ENCODE measurements at regions of chr17 and their contacts with region 1.

Region 1: GRCh38 chr17:42112552-42113176 is at the start of gene DHX58:
- DNase-seq: peak; percentile 55
- ATAC-seq: peak; percentile 76
- H3K4me3 Mint-ChIP-seq: peak within 1 kb of the TSS; percentile 80
- H3K27ac Mint-ChIP-seq: peak within 1 kb of the TSS; percentile 91
- H3K4me1 Mint-ChIP-seq: peaks cover 57% of the 10 kb centered on the region
- H3K27me3 Mint-ChIP-seq: no peaks in the 10 kb centered on the region
- CTCF ChIP-seq: no peak
- total RNA-seq, gene DHX58: 21.9 and 22.4 TPM in 2 replicates

Region 2: DNA sequence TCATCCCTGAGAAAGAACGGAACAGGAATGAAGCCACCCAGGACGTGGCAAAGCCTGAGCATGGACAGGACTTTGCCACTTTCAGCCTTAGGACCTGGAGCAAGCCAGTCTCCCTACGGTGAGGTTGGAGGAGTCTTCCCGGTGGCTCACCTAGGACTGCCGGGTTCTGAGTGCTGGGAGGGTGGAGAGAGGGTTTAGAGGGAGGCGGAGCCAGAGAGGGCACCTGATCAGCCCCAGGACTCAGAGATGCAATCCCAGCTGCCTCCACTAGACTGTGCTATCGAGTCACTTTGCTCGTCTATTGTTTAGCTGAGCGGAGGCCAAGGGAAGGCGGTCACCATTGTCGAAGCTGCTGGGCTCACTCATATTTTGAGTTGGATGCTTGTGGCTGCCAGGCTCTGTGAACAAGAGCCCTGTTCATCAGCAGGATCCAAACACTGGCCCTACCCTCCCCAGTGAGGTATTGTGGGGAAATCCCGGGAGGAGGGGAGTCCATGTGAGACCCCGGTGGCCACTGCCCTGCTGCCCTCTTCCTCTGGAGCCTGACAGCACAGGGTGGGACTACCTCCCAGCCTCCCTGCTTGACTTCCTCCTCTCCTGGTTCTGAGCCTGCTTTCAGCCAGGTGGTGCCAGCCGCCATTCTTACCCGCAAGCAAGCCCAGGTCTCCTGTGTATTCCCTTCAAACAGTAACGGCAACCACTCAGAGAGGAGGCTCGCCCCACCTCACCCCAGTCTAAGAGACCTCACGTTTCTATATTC is 533.0 kb before region 1 on chr17:
- CTCF ChIA-PET with region 1: no interaction called
- POLR2A ChIA-PET with region 1: no interaction called
- intact Hi-C with region 1: no loop called
- DNase-seq: no peak
- ATAC-seq: peak; percentile 66
- H3K4me3 Mint-ChIP-seq: no peak overlapping the region
- H3K27ac Mint-ChIP-seq: no peak overlapping the region
- H3K4me1 Mint-ChIP-seq: no peaks in the 10 kb centered on the region
- H3K27me3 Mint-ChIP-seq: peaks cover 44% of the 10 kb centered on the region
- CTCF ChIP-seq: no peak

Region 3: DNA sequence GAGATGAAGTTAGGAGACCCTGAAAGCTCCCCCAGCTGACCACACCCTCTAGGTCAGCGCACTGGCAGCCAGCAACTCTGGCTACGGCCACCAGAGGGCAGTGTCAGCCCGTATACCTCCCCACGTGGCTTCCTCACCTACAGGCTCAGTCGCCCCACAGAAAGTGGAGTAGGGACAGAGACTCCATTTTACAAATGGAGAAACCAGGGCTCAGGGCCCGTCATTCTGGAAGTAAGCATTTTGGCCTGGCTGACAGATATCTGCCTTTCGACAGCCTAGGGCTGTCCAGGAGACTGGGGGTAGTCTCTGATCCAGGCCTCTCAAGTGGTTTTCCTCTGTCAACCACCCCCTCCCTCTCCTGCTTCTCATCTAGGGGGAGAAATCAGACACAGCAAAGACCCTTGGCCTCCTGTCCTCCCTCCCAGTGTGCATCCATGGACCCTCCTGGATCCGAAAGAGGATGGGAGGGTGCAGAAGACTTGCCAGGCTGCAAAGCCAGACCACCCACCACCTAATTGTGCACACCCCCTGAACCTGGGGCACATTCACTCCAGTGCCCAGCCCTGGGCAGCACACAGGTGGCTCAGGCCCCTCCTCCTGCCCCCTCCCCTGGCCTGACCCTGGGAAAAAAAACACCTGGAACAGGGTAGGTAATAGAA is 374.5 kb before region 1 on chr17:
- CTCF ChIA-PET with region 1: no interaction called
- POLR2A ChIA-PET with region 1: no interaction called
- intact Hi-C with region 1: loop called (anchors 1 kb)
- DNase-seq: peak; percentile 77
- ATAC-seq: peak; percentile 96
- H3K4me3 Mint-ChIP-seq: no peak overlapping the region
- H3K27ac Mint-ChIP-seq: no peak overlapping the region
- H3K4me1 Mint-ChIP-seq: peaks cover 11% of the 10 kb centered on the region
- H3K27me3 Mint-ChIP-seq: peaks cover 22% of the 10 kb centered on the region
- CTCF ChIP-seq: peak; percentile 94

Region 4: GRCh38 chr17:41918314-41919164 is 194.1 kb before region 1 on chr17 and contains the start of gene ACLY:
- CTCF ChIA-PET with region 1: no interaction called
- POLR2A ChIA-PET with region 1: interaction called, 3 read pairs
- intact Hi-C with region 1: loop called (anchors 1 kb)
- DNase-seq: peak; percentile 96
- ATAC-seq: peak; percentile 99
- H3K4me3 Mint-ChIP-seq: peak within 1 kb of the TSS; percentile 92
- H3K27ac Mint-ChIP-seq: peak within 1 kb of the TSS; percentile 84
- H3K4me1 Mint-ChIP-seq: peaks cover 31% of the 10 kb centered on the region
- H3K27me3 Mint-ChIP-seq: no peaks in the 10 kb centered on the region
- CTCF ChIP-seq: no peak
- total RNA-seq, gene ACLY: 133 and 143 TPM in 2 replicates

Region 5: DNA sequence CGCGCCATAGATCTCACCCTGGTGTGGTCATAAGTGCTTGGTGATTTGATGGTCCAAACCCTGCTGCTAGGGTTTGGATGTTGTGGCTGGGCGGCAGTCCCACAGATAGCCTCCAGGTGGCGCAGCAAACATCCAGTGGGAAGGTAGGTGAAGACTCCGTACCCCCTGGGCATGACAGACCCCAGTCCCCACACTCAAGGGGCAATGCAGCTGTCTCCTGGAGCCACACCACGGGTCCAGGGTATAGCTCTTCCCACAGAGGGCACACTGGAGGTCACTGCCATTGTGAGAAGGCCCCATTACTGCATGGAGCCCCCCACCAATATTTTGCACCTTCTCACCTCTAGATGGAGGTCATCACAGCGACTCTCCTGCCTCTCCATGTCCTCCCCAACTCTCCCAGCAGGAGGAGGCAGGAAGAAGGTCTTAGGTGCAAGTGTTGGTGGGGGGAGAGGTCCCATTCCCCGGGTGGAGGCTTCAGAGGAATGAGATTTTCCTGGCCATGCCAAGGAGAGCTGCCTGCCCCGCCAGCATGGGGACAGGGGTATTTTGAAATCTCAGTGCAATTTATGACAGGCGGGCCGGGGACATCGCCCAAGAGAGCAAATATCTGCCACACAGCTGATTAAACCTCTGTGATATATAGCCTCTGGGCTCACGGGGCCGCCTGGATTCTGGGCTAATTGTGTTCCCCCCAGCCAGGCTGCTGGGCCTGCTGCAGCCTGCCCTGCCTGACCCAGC is 45.1 kb before region 1 on chr17:
- CTCF ChIA-PET with region 1: interaction called, 72 read pairs
- POLR2A ChIA-PET with region 1: interaction called, 7 read pairs
- intact Hi-C with region 1: loop called (anchors 1 kb)
- DNase-seq: peak; percentile 66
- ATAC-seq: peak; percentile 70
- H3K4me3 Mint-ChIP-seq: no peak overlapping the region
- H3K27ac Mint-ChIP-seq: no peak overlapping the region
- H3K4me1 Mint-ChIP-seq: peaks cover 28% of the 10 kb centered on the region
- H3K27me3 Mint-ChIP-seq: peaks cover 8% of the 10 kb centered on the region
- CTCF ChIP-seq: no peak

Region 6: DNA sequence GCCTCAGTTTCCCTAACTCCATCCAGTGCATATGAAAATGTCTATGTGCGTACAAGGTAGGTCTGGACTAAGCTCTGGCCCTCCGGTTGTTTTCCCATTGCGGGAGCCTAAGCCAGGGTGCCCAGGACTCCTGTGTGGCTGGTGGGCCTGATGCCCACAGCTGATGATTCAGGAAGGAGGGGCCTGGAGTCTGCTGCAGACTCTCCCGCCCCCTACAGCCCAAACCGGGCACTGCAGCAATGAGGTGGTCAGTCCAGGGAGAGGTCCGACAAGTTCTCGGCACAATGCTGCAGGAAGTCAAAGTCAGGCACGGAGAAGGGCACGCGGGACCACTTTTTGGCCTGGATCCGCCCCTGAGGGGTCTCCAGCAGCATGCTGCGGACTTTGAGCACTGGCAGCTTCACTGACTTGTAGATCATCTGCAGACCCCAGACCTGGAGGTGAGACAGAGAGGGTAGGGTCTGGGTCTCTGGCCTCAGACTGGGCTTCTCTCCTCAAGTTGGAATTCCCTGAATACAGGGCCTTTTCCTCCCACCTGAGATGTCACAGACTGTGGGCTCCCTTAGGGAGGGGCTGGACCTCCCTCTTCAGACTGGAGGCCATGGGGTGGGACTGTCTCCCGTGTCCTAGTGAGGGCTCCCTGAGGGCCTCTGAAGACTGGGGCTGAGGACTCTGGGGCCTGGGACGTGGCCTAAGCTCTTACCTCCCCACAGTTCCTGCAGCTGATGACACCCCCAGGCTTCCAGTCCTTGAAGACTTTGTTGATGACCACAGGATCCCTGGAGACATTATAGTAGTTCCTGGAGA is 10.9 kb before region 1 on chr17:
- CTCF ChIA-PET with region 1: interaction called, 8 read pairs
- POLR2A ChIA-PET with region 1: interaction called, 33 read pairs
- intact Hi-C with region 1: loop called (anchors 1 kb)
- DNase-seq: peak; percentile 67
- ATAC-seq: peak; percentile 60
- H3K4me3 Mint-ChIP-seq: no peak overlapping the region
- H3K27ac Mint-ChIP-seq: no peak overlapping the region
- H3K4me1 Mint-ChIP-seq: peaks cover 14% of the 10 kb centered on the region
- H3K27me3 Mint-ChIP-seq: no peaks in the 10 kb centered on the region
- CTCF ChIP-seq: no peak

Region 7: DNA sequence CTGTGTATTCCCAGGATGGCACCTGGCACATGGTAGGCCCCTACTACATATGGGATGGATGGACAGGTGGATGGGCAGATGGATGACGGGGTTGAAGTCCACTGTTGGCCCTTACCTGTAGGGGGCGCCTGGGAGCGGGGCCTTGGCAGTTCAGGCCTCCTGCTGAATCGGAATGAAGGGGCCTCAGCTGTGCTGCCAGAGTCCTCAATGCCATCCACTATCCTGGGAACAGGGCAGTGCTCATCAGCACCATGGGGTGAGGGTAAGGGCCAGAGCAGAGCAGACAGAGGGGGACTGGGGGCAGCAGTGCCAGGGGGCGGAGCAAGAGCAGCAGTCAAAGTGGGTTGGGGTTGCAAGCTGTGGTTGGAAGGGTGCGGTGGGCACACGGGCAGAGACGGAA is 50.4 kb after region 1 on chr17:
- CTCF ChIA-PET with region 1: no interaction called
- POLR2A ChIA-PET with region 1: no interaction called
- intact Hi-C with region 1: no loop called
- DNase-seq: no peak
- ATAC-seq: no peak
- H3K4me3 Mint-ChIP-seq: no peak overlapping the region
- H3K27ac Mint-ChIP-seq: no peak overlapping the region
- H3K4me1 Mint-ChIP-seq: peaks cover 8% of the 10 kb centered on the region
- H3K27me3 Mint-ChIP-seq: no peaks in the 10 kb centered on the region
- CTCF ChIP-seq: no peak

Region 8: GRCh38 chr17:42200702-42201101 is 88.0 kb after region 1 on chr17:
- CTCF ChIA-PET with region 1: no interaction called
- POLR2A ChIA-PET with region 1: no interaction called
- intact Hi-C with region 1: no loop called
- DNase-seq: no peak
- ATAC-seq: no peak
- H3K4me3 Mint-ChIP-seq: no peak overlapping the region
- H3K27ac Mint-ChIP-seq: peak overlapping the region; percentile 35
- H3K4me1 Mint-ChIP-seq: peaks cover 15% of the 10 kb centered on the region
- H3K27me3 Mint-ChIP-seq: no peaks in the 10 kb centered on the region
- CTCF ChIP-seq: no peak

Measured in activated B cell treated with CpG ODN at 0.5 μM for 24 hours (primary cell).